Panc1 (cell line): ENCODE measurements at regions of chr7 and their contacts with region 1.

Region 1: DNA sequence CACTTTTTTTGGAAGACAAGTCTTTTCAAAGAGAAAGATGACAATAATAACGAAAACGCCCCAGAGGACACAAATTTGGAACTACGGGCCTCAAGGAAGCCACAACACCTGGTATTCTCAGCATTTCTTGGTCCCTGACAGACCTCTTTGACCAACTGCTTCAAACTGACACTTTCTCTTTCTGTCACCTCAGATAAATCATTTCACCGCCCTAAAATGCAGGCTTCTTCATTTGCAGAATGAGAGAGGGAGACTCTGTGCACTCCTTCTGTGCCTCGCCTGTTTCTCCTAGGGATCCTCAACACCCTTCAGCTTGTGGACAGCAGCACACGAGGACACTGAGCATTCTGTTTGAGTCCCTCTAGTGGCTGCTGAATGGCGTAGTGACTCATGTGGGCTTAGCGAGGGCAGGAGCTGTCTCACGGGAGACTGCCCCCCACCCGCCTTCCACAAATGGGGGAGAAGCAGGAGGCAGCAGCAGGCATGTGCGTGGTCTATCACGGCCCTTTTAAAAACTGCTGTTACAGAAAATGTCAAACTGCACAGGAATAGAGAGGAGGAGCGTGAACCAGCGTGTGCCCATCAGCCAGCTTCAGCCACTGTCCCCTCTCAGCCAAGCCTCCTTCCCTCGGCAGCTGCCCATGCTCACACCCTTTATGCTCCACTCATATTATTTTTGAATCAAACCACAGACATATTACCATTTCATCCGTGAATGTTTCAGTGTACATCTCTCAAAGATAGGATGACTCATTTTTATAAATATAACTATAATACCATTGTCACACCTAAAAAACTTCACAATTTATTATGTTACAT is 41.4 kb downstream of the GSDME start:
- DNase-seq: peak; percentile 25
- ATAC-seq: peak; percentile 89
- H3K4me3 ChIP-seq: no peak overlapping the region
- H3K27ac ChIP-seq: no peak overlapping the region
- H3K4me1 ChIP-seq: no peaks in the 10 kb centered on the region
- H3K27me3 ChIP-seq: no peaks in the 10 kb centered on the region
- CTCF ChIP-seq: peak; percentile 80

Region 2: DNA sequence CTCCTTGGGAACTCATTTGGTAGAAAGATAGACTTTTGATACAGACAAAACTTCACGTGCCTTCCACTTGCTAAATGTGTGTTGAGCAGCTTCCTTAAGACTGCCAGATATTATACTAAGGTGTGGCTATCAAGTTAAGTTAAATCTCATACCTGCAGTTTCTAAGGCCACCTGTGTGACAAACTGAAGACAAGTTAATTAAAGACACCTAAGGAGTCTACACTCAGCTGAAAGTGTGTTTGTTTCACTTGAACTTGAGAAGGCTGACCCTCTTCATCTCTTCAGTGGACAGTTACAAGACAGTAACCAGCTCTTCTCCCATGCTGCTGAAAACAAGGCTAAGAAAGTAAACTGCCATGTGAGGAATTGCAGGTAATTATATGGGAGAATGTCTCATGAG is 307.9 kb before region 1 on chr7:
- CTCF ChIA-PET with region 1: no interaction called
- POLR2A ChIA-PET with region 1: interaction called, 13 read pairs
- in situ Hi-C with region 1: no loop called
- intact Hi-C with region 1: no loop called
- DNase-seq: no peak
- ATAC-seq: no peak
- H3K4me3 ChIP-seq: no peak overlapping the region
- H3K27ac ChIP-seq: no peak overlapping the region
- H3K4me1 ChIP-seq: no peaks in the 10 kb centered on the region
- H3K27me3 ChIP-seq: peaks cover 7% of the 10 kb centered on the region; the same call in 1 of the 2 replicates
- CTCF ChIP-seq: no peak

Region 3: GRCh38 chr7:24455813-24456525 is 259.9 kb before region 1 on chr7:
- CTCF ChIA-PET with region 1: no interaction called
- POLR2A ChIA-PET with region 1: no interaction called
- in situ Hi-C with region 1: no loop called
- intact Hi-C with region 1: no loop called
- DNase-seq: no peak
- ATAC-seq: no peak
- H3K4me3 ChIP-seq: no peak overlapping the region
- H3K27ac ChIP-seq: no peak overlapping the region
- H3K4me1 ChIP-seq: no peaks in the 10 kb centered on the region
- H3K27me3 ChIP-seq: peaks cover 8% of the 10 kb centered on the region; the same call in 1 of the 2 replicates
- CTCF ChIP-seq: no peak

Region 4: GRCh38 chr7:24653316-24654085 is 62.4 kb before region 1 on chr7:
- CTCF ChIA-PET with region 1: no interaction called
- POLR2A ChIA-PET with region 1: no interaction called
- in situ Hi-C with region 1: no loop called
- intact Hi-C with region 1: loop called (anchors 10 kb)
- DNase-seq: no peak
- ATAC-seq: no peak
- H3K4me3 ChIP-seq: no peak overlapping the region
- H3K27ac ChIP-seq: peak overlapping the region; percentile 2; the same call in 1 of the 2 replicates
- H3K4me1 ChIP-seq: 0 out of 2 replicates have a peak, but pooled peaks cover 5% of the 10 kb centered on the region
- H3K27me3 ChIP-seq: no peaks in the 10 kb centered on the region
- CTCF ChIP-seq: no peak

Region 5: DNA sequence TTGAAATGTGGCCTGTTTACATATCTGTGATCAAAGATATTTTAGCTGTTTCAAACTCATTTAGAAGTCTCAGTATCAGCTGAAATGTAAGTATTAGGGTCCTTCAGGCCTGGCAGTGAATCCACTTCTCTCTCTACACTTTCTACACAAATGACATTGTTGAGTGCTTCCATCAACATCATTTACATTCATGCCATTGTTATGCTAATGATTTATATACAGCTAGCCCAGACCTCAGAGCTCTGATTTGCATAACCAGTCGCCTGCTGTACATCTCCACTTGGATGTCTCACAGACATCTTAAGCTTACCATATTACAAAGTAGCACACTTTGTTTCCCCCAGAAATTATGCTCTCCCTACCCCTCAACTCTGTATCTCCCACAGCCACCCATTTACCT is 30.2 kb before region 1 on chr7:
- CTCF ChIA-PET with region 1: no interaction called
- POLR2A ChIA-PET with region 1: no interaction called
- in situ Hi-C with region 1: no loop called
- intact Hi-C with region 1: no loop called
- DNase-seq: no peak
- ATAC-seq: no peak
- H3K4me3 ChIP-seq: no peak overlapping the region
- H3K27ac ChIP-seq: no peak overlapping the region
- H3K4me1 ChIP-seq: no peaks in the 10 kb centered on the region
- H3K27me3 ChIP-seq: no peaks in the 10 kb centered on the region
- CTCF ChIP-seq: no peak

Region 6: DNA sequence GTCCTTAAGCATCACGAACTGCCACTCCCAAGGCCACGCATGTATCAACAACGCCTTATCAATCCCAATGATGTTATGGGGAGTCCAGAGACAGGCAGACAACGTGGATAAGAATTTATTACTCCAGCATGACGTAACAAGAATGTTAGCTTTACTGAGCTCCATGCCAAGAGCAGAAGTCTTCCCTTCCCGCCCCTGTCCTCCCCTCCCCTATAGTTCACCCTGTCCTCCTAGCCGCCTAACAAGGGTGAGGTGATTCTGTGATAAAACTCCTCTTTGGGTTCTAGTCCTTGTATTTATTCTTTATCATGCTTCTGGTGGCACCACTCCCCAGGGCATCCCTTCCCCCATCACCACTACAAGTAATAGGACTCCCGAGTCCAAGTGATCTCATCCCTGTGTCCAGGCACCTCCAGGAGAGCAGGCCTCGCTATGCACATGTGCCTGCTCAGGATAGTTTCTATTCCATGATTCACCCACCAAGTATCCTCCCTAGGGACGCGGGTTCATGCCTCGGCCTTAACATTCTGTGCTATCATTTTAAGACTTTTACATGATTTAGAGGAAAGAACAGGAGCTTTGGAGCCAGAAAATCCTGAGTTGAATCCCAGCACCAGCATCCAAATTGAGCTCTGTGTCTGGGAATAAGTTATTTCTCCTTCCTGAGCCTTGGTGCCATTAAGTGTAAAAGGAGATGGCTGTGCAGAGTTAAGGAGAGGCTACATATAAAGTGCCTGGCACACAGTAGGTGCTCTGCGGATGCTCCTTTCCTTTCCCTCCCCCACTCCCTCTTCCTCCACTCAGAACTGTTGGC is 26.0 kb after region 1 on chr7:
- CTCF ChIA-PET with region 1: no interaction called
- POLR2A ChIA-PET with region 1: no interaction called
- in situ Hi-C with region 1: no loop called
- intact Hi-C with region 1: no loop called
- DNase-seq: no peak
- ATAC-seq: no peak
- H3K4me3 ChIP-seq: no peak overlapping the region
- H3K27ac ChIP-seq: no peak overlapping the region
- H3K4me1 ChIP-seq: no peaks in the 10 kb centered on the region
- H3K27me3 ChIP-seq: no peaks in the 10 kb centered on the region
- CTCF ChIP-seq: no peak